ENCODE measurements at regions of chr1 and their contacts with region 1.

Region 1: GRCh38 chr1:15968172-15968571 is 7.7 kb downstream of the ZBTB17 start:
- DNase-seq: no peak
- H3K4me3 ChIP-seq: no peak overlapping the region
- H3K27ac ChIP-seq: no peak overlapping the region
- H3K4me1 ChIP-seq: no peaks in the 10 kb centered on the region
- H3K27me3 ChIP-seq: no peaks in the 10 kb centered on the region
- CTCF ChIP-seq: no peak
- EP300 ChIP-seq: no peak
- POLR2A ChIP-seq: no peak
- RAD21 ChIP-seq: no peak

Region 2: DNA sequence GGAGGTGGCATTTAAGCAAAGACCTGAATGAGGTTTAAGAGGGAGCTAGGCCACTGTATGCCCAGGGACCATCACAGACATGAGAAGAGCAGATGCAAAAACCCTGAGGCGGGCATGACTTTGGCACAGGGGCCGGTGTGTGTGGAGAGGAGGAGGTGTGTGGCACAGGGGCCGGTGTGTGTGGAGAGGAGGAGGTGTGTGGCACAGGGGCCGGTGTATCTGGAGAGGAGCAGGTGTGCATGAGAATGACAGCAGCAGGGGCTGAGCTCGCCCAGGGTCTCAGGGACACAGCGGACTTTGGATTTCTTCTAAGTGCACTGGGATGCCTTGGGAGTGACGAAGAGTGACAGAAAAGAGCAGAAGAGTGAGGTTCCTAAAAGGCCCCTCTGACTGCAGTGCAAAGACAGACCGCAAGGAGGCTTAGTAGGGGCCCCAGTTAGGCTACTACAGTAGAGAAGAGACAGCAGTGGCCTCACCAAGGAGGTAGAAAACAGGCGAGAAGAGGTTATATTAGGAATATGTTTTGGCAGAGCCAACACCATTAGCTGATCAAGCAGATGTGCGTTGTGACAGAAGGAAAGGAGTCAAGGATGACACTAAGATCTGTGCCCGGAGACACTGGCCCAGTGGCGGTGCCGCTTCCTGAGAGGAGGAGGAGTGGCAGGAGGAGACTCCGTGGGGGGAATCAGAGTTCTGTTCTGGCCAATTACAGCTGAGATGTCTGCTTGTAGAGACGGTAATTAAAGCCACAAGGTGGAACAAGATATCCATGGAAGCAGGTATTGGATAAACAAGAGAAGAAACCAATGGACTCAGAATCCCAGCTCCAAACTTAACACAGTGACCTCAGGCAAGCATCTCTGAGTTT is 10.7 kb before region 1 on chr1:
- CTCF ChIA-PET with region 1: interaction called, 53 read pairs
- POLR2A ChIA-PET with region 1: interaction called, 4 read pairs
- DNase-seq: peak in 1 of 2 experiments; percentile 76
- H3K4me3 ChIP-seq: no peak overlapping the region
- H3K27ac ChIP-seq: no peak overlapping the region
- H3K4me1 ChIP-seq: peaks cover 6 to 18% (median 11%) of the 10 kb centered on the region in 4 experiments
- H3K27me3 ChIP-seq: peaks cover 0 to 3% (median under 1%) of the 10 kb centered on the region in 4 experiments; a peak in 2 of 7 replicates
- CTCF ChIP-seq: peak; percentile 52 to 75 (median 72)
- EP300 ChIP-seq: no peak
- POLR2A ChIP-seq: no peak
- RAD21 ChIP-seq: peak; percentile 34 to 60; a peak in 3 of 4 replicates

Region 3: DNA sequence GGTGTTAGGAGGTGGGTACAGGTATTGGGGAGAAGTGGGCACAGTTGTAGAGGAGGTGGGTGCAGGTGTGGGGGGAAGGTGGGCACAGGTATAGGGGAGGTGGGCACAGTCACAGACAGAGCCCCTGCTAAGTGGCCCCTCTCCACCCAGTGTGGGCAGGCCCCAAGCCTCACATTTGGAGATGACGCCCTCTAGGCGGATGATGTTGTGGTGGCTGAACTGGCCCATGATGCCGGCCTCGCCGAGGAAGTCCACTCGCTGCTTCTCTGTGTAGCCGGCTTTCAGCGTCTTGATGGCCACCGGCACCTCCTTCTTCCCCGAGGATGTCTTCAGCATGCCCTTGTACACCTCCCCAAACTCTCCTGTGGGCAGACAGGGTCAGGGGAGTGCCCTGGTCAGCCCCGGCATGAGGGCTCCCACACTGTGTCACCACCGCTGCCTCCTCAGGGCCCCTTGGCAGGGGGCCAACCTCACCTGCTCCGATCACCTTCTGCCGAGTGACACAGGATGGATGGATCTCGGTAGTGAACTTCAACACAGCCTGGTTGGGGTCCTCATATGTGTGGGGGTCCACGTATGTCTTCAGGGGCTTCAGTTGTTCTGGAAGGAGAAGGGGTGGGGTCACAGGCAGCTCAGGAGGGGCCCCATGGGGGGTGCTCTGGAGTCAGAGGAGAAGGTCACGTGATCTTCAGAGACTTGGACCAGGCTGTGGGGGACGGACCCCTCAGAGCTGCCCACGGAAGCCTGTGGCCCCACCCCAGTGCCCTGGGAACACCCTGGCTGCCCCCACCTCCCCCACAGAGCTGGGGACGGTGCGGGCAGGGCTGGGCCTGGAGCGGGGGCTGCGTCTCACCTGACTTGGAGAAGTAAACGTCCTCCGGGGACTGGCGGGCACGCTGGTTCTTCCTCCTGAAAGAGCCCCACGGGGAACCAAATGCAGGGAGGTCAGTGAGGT is 165.1 kb after region 1 on chr1:
- CTCF ChIA-PET with region 1: no interaction called
- POLR2A ChIA-PET with region 1: no interaction called
- DNase-seq: no peak
- H3K4me3 ChIP-seq: no peak overlapping the region
- H3K27ac ChIP-seq: no peak overlapping the region
- H3K4me1 ChIP-seq: no peaks in the 10 kb centered on the region
- H3K27me3 ChIP-seq: no peaks in the 10 kb centered on the region
- CTCF ChIP-seq: no peak
- EP300 ChIP-seq: no peak
- POLR2A ChIP-seq: no peak
- RAD21 ChIP-seq: no peak